PC-9 (cell line): ENCODE measurements at regions of chr21 and their contacts with region 1.

Region 1: DNA sequence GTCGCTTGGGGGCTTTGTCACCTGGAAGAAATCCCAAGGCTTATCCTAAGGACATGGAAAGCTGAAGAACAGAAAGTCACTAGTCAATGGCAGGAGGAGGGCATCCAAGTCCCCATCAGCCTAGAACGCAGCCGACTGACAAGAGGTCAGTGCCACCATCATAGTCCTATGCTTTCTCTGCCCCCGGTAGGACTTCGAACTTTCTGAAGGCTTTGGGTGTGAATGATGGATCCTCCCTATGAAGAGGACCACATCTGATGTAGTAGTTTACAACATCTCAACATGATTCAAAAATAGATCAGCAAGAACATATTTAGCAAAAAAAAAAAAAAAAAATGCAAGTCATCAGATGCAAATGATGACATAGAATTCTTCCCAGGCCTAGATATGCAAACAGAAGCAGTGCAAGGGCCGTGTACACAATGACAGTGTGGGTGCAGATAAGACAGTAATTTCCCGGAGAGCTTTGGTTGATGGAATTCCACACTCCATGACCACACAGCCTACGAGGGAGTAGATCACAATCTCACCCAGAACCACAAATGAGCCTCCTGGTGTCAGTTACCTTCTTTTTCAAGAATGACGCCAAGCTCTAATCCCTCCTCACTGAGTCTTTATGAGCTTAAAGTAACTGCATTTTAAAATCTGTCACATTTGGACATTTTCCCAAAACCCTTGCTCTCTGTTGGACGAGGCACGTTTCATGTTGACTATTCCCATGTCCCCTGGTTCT is 88.2 kb downstream of the PSMG1 start:
- DNase-seq: peak; percentile 57 to 72
- H3K4me3 ChIP-seq: no peak overlapping the region
- H3K27ac ChIP-seq: 0 out of 2 replicates have a peak overlapping the region, but pooled peaks have one; percentile 32
- H3K4me1 ChIP-seq: peaks cover 5% of the 10 kb centered on the region; the same call in 1 of the 2 replicates
- H3K27me3 ChIP-seq: no peaks in the 10 kb centered on the region
- CTCF ChIP-seq: no peak

Region 2: GRCh38 chr21:38950435-38951094 is 144.4 kb before region 1 on chr21:
- CTCF ChIA-PET with region 1: no interaction called
- POLR2A ChIA-PET with region 1: no interaction called
- intact Hi-C with region 1: no loop called
- DNase-seq: no peak
- H3K4me3 ChIP-seq: no peak overlapping the region
- H3K27ac ChIP-seq: no peak overlapping the region
- H3K4me1 ChIP-seq: no peaks in the 10 kb centered on the region
- H3K27me3 ChIP-seq: no peaks in the 10 kb centered on the region
- CTCF ChIP-seq: no peak

Region 3: DNA sequence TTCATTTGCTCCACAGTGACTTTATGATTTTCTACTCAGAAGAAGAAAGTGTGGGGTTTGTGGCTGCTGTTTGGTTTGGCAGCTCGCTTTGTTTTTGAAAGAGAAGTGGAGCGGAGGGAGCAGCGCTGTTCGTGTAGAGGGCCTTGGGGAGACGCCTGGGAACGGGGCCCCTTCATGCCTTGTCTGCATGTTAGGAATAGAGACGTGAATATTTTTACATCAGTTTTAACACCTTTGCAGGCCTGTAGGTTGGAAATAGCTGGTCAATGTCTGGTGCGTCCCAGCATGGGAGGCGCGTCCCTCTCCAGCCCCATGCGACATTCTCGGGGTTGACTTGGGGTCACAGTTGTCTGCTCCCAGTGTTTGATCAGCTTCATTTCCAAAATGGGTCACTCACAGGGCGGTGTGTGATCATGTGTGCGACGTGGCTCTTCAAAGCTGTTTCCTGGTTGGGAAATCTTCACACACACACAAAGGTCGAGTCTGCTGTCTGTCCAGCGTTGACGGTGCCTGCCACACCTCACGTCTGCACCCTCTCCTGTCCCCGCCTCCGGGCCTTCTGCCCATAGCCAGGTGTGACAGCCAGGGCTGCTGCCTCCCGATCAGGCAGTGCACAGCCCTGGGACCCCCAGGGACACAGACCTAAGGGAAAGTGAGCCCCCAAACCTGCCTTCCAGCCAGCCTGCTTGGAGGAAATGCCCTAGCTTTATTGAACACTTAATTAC is 61.0 kb before region 1 on chr21:
- CTCF ChIA-PET with region 1: interaction called, 3 read pairs
- POLR2A ChIA-PET with region 1: interaction called, 3 read pairs
- intact Hi-C with region 1: loop called (anchors 2 kb)
- DNase-seq: peak in 1 of 2 experiments; percentile 31
- H3K4me3 ChIP-seq: no peak overlapping the region
- H3K27ac ChIP-seq: no peak overlapping the region
- H3K4me1 ChIP-seq: peaks cover 13% of the 10 kb centered on the region
- H3K27me3 ChIP-seq: no peaks in the 10 kb centered on the region
- CTCF ChIP-seq: no peak